ENCODE measurements at regions of chr6 and their contacts with region 1.

Region 1: DNA sequence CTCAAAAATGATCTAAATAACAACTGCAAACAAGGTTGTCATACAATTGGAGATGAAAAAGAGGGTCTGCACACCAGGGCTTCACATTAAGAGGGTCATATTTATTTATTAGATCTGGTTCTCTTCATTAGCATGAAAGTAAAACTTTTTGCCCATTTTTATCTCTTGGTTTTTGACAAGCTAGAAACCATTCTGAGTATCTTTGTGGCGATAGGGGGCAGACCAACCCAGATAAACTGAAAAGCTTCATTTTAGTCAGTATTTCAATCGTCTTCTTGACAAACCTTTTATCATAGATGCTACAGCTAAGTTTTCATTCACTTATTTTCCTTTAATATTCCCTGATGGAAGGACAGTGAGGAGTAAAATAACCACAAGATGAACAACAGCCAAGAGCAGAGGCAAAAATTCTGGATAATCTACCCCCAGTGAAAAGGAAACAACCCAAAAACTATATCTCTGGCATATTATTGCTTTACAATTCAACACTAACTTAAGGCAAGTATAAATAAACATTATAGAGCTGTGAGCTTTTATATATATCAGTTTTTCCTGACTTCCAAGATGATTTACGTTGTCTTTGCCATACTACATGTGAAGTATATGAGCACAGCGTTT is 45.2 kb downstream of the THEMIS start:
- DNase-seq: peak; percentile 58
- H3K4me3 ChIP-seq: no peak overlapping the region
- H3K27ac ChIP-seq: no peak overlapping the region
- H3K4me1 ChIP-seq: peaks cover 17% of the 10 kb centered on the region
- H3K27me3 ChIP-seq: no peaks in the 10 kb centered on the region
- CTCF ChIP-seq: peak; percentile 71

Region 2: DNA sequence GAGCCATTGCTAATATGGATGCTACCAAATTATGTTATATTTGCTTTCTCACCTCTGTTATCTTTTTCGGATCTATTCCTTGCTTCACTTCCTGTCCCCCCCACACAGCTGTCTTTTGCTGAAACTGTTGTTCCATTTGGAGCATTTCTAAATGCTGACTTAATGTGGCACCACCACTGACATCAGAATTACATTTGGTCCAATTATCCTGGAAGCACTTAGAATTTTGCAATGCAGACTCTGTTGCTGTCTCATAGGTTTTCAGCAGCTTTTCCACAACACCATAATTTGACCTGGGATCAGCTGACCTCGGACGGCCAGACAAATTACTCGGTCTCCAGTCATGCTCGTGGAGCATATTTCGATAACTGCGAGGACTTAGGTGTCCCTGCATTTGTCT is 409.3 kb before region 1 on chr6:
- CTCF ChIA-PET with region 1: no interaction called
- POLR2A ChIA-PET with region 1: no interaction called
- intact Hi-C with region 1: no loop called
- DNase-seq: peak; percentile 32
- H3K4me3 ChIP-seq: no peak overlapping the region
- H3K27ac ChIP-seq: peak overlapping the region; percentile 6
- H3K4me1 ChIP-seq: no peaks in the 10 kb centered on the region
- H3K27me3 ChIP-seq: no peaks in the 10 kb centered on the region
- CTCF ChIP-seq: no peak

Region 3: DNA sequence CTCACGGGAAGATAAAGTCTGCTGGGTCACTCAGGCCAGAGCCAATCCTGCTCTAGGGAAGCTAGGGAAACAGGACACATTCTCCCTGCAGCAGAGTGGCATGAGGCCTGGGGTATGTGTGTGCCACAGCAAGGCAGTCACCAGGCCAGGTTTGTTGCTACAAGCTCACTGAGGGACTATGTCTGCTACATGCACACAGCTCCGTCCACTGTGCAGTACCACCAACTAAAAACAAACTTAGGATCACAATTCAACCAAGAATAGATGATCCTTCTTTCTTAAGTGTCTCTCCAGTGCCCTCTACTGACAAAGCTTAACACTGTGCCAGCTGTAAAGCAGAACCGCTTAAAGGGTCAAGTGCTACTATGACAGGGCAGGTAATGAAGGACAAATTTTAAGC is 472.2 kb after region 1 on chr6:
- CTCF ChIA-PET with region 1: interaction called, 6 read pairs
- POLR2A ChIA-PET with region 1: no interaction called
- intact Hi-C with region 1: loop called (anchors 5 kb)
- DNase-seq: peak; percentile 64
- H3K4me3 ChIP-seq: no peak overlapping the region
- H3K27ac ChIP-seq: no peak overlapping the region
- H3K4me1 ChIP-seq: peaks cover 31% of the 10 kb centered on the region
- H3K27me3 ChIP-seq: no peaks in the 10 kb centered on the region
- CTCF ChIP-seq: peak; percentile 64

Region 4: DNA sequence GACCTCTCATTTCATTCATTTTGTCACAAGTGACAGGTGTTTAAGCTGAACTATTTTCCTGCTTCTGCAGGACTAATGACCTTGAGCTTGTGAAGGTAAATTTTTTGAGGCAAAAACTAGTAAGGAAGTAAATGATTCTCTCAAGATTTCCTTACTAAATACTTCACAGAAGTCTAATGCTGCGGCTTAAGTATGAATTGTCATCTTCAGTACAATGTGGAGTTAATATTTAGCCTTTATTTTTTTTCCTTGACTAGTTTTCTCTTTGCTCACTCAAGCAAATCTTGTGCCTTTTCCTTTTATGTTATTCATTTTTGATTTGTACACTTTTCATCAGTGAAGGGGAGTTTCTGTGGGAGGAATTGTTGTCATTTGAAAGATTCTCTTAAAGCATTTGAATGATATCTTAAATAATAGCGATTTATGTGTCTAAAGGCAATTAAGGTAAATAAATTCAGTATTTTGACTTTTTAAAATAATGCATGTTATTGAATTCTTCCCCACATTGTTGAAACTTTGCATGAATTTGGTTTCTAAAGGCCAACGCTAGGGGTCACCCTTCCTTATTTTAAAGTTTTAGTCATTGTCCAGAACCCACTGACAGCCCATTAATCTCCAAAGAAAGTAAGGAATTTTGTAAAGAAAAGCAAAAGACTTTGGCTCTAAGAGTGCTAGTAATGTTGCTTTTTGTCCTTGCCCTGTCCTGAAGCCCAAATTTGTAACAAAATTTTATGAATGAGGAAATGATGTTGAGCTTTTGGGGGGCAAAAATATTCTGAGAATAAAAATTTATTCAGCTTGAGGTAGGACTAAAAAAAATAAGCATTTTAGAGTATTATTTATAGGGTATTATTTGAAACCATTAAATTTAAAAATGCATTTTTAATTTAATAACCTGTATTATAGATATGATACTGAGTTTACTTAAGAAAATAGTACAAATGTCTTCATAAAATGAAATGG is 869.9 kb after region 1 on chr6:
- CTCF ChIA-PET with region 1: no interaction called
- POLR2A ChIA-PET with region 1: no interaction called
- intact Hi-C with region 1: loop called (anchors 5 kb)
- DNase-seq: peak; percentile 60
- H3K4me3 ChIP-seq: no peak overlapping the region
- H3K27ac ChIP-seq: no peak overlapping the region
- H3K4me1 ChIP-seq: peaks cover 8% of the 10 kb centered on the region
- H3K27me3 ChIP-seq: no peaks in the 10 kb centered on the region
- CTCF ChIP-seq: peak; percentile 81